Common myeloid progenitor, CD34-positive (primary cell): ENCODE measurements at regions of chr1 and their contacts with region 1.

Region 1: DNA sequence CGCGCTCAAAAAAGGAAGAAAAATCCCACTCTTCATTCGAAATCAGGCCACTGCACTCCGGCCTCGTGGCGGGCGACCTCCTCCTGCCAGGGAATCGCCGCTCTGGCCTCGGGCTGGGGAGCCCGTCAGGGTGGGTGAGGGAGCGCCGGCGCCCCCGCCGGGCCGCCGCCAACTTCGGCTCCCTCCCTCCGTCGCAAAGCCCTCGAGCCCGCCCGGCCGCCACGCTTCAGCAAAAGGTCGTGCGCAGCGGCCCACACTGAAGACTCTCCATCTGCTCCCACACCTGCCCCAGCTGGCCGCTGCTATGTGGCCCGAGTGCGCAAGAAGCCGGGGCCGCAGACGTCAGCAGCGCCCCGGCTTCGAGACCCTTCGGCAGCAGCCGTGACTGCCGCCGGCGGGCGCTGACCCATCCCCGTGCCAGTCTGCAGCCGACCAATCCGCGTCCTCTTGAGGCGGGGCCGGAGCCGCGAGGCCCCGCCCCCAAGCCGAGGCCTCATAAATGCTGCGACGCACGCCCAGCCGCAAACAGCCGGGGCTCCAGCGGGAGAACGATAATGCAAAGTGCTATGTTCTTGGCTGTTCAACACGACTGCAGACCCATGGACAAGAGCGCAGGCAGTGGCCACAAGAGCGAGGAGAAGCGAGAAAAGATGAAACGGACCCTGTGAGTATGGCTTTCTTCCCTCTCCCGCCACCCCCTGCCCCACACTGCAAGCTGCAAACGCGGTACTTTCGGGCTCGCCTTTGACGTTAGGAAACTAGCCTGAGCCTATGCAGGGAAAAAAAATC is at the start of gene RGS2:
- DNase-seq: peak; percentile 87 to 92 (median 91)
- H3K4me3 ChIP-seq: peak within 1 kb of the TSS; percentile 76 to 100 (median 95)
- H3K27ac ChIP-seq: peak within 1 kb of the TSS in 1 of 2 experiments; percentile 59
- H3K4me1 ChIP-seq: peaks cover 21 to 43% (median 34%) of the 10 kb centered on the region in 4 experiments
- H3K27me3 ChIP-seq: peaks cover 0 to 4% (median 0%) of the 10 kb centered on the region in 5 experiments

Region 2: DNA sequence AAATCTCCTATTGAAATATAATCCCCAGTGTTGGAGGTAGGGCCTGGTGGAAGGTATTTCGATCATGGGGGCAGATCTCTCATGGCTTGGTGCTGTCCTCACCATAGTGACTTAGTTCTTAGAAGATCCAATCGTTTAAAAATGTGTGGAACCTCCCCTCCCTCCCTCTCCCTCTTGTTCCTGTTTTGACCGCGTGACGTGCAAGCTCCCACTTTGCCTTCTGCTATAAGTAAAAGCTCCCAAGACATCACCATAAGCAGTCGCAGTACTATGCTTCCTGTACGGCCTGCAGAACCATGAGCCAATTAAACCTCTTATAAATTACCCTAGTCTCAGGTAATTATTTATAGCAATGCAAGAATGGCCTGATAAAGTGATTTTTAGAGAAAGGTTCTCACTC is 10.8 kb before region 1 on chr1:
- CTCF ChIA-PET with region 1: interaction called, 11 read pairs
- POLR2A ChIA-PET with region 1: no interaction called
- DNase-seq: peak in 2 of 3 donors; percentile 48 to 53
- H3K4me3 ChIP-seq: no peak overlapping the region
- H3K27ac ChIP-seq: no peak overlapping the region
- H3K4me1 ChIP-seq: peaks cover 3 to 11% (median 7%) of the 10 kb centered on the region in 4 experiments
- H3K27me3 ChIP-seq: no peaks in the 10 kb centered on the region

Region 3: GRCh38 chr1:193019442-193020026 is 210.8 kb after region 1 on chr1:
- CTCF ChIA-PET with region 1: interaction called, 119 read pairs
- POLR2A ChIA-PET with region 1: no interaction called
- DNase-seq: peak; percentile 56 to 77 (median 72)
- H3K4me3 ChIP-seq: no peak overlapping the region
- H3K27ac ChIP-seq: no peak overlapping the region
- H3K4me1 ChIP-seq: no peaks in the 10 kb centered on the region
- H3K27me3 ChIP-seq: no peaks in the 10 kb centered on the region